ENCODE measurements at regions of chr1 and their contacts with region 1.

Region 1: GRCh38 chr1:153880962-153881361 is 41.8 kb downstream of the GATAD2B start:
- DNase-seq: no peak
- H3K4me3 Mint-ChIP-seq: no peak overlapping the region
- H3K27ac Mint-ChIP-seq: no peak overlapping the region
- H3K4me1 Mint-ChIP-seq: peaks cover 6% of the 10 kb centered on the region
- H3K27me3 Mint-ChIP-seq: no peaks in the 10 kb centered on the region

Region 2: GRCh38 chr1:153478692-153479618 is 402.0 kb before region 1 on chr1:
- intact Hi-C with region 1: no loop called
- DNase-seq: no peak
- H3K4me3 Mint-ChIP-seq: no peak overlapping the region
- H3K27ac Mint-ChIP-seq: no peak overlapping the region
- H3K4me1 Mint-ChIP-seq: no peaks in the 10 kb centered on the region
- H3K27me3 Mint-ChIP-seq: peaks cover 40% of the 10 kb centered on the region

Region 3: GRCh38 chr1:153816283-153816889 is 64.6 kb before region 1 on chr1:
- intact Hi-C with region 1: loop called (anchors 10 kb)
- DNase-seq: no peak
- H3K4me3 Mint-ChIP-seq: no peak overlapping the region
- H3K27ac Mint-ChIP-seq: no peak overlapping the region
- H3K4me1 Mint-ChIP-seq: no peaks in the 10 kb centered on the region
- H3K27me3 Mint-ChIP-seq: no peaks in the 10 kb centered on the region